ENCODE measurements at regions of chr3 and their contacts with region 1.

Region 1: GRCh38 chr3:133799794-133800585 is 5.6 kb upstream of the SRPRB start:
- DNase-seq: no peak
- ATAC-seq: peak; percentile 37
- H3K4me3 ChIP-seq: no peak overlapping the region
- H3K27ac ChIP-seq: no peak overlapping the region
- H3K4me1 ChIP-seq: no peaks in the 10 kb centered on the region; a peak in 1 of 5 replicates
- H3K27me3 ChIP-seq: no peaks in the 10 kb centered on the region
- CTCF ChIP-seq: no peak
- EP300 ChIP-seq: no peak
- POLR2A ChIP-seq: no peak
- RAD21 ChIP-seq: no peak

Region 2: GRCh38 chr3:133674290-133674919 is 125.6 kb before region 1 on chr3:
- CTCF ChIA-PET with region 1: no interaction called
- POLR2A ChIA-PET with region 1: no interaction called
- in situ Hi-C with region 1: loop called (anchors 5 kb)
- intact Hi-C with region 1: no loop called
- DNase-seq: no peak
- ATAC-seq: no peak; the same call in 2 of the 3 replicates
- H3K4me3 ChIP-seq: no peak overlapping the region
- H3K27ac ChIP-seq: no peak overlapping the region
- H3K4me1 ChIP-seq: no peaks in the 10 kb centered on the region
- H3K27me3 ChIP-seq: peaks cover 0 to 13% of the 10 kb centered on the region in 2 experiments; a peak in 2 of 5 replicates
- CTCF ChIP-seq: no peak
- EP300 ChIP-seq: no peak
- POLR2A ChIP-seq: no peak
- RAD21 ChIP-seq: no peak

Measured in K562 (cell line).